Psoas muscle (tissue), 8 donors: ENCODE measurements at regions of chr4 and their contacts with region 1.

Region 1: GRCh38 chr4:17347445-17347844 is 164.4 kb downstream of the QDPR start:
- DNase-seq: no peak
- ATAC-seq: no peak
- H3K4me3 ChIP-seq: no peak overlapping the region
- H3K27ac ChIP-seq: no peak overlapping the region
- H3K4me1 ChIP-seq: no peaks in the 10 kb centered on the region
- H3K27me3 ChIP-seq: no peaks in the 10 kb centered on the region
- CTCF ChIP-seq: peak; percentile 36

Region 2: DNA sequence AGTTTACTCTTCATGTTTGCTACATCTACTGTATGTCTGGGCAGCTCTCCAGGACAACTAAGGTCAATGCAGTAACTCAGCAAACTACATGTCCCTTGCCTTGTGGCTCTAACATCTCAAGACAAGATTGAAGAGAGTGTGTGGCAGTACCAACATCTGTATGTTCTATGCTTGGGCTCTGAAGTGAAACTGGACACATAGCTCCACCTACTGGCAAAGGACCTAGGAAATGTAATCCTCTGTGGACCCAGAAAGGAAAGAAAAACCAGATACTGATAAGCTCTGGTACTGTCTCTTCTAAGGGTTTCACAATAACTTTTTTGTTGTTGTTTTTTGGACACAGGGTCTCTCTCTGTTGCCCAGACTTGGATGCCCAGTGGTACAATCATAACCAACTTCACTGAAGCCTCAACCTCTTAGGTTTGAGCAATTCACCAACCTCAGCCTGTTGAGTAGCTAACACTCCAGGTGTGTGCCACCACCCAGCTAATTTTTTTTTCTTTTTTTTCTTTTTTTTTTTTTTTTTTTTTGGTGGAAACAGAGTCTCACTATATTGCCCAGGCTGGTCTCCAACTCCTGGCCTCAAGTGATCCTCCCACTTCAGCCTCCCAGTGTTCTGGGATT is 100.3 kb after region 1 on chr4:
- intact Hi-C with region 1: loop called in 1 of 2 experiments (anchors 5 kb)
- DNase-seq: no peak
- ATAC-seq: peak in 3 of 4 donors; percentile 32 to 61 (median 45)
- H3K4me3 ChIP-seq: no peak overlapping the region
- H3K27ac ChIP-seq: no peak overlapping the region
- H3K4me1 ChIP-seq: no peaks in the 10 kb centered on the region
- H3K27me3 ChIP-seq: no peaks in the 10 kb centered on the region
- CTCF ChIP-seq: peak; percentile 46